ENCODE measurements at regions of chr2 and their contacts with region 1.

Region 1: GRCh38 chr2:235595422-235596010 is 101.7 kb downstream of the AGAP1 start:
- DNase-seq: peak; percentile 51
- H3K4me3 ChIP-seq: no peak overlapping the region
- H3K27ac ChIP-seq: no peak overlapping the region
- H3K4me1 ChIP-seq: peaks cover 14% of the 10 kb centered on the region
- H3K27me3 ChIP-seq: no peaks in the 10 kb centered on the region
- CTCF ChIP-seq: peak; percentile 85 to 89

Region 2: DNA sequence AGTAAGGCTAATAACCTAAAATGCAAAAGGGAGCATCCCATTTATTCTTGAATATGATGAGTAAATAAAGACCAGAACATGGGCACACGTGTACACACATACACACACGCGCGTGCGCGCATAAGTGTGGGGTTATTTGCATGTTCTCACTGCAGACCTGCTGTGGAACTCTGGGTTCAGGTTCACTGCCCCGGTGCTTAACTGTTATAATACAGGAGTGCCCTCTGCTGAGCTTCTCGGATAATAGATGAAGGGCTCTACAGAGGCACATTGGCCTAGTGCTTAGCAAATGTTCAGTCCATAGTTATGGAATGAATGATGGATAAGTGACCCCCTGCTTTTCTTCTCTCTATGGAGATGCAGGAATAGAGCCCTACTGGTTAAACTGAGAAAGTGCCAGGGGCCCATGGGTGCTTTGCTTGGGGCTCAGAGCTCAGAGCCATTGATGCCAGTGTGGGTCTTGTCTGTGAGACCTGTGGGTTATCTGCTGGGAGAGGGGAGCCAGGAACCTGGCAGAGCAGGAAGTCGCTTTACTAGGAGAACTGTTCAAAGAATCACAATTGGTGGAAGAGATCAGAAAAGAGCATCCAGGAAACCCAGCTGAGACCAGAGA is 1095.0 kb before region 1 on chr2:
- CTCF ChIA-PET with region 1: no interaction called
- dilution Hi-C with region 1: no loop called
- in situ Hi-C with region 1: no loop called
- intact Hi-C with region 1: no loop called
- DNase-seq: peak; percentile 47
- H3K4me3 ChIP-seq: no peak overlapping the region
- H3K27ac ChIP-seq: no peak overlapping the region
- H3K4me1 ChIP-seq: peaks cover 31% of the 10 kb centered on the region
- H3K27me3 ChIP-seq: no peaks in the 10 kb centered on the region
- CTCF ChIP-seq: peak; percentile 54 to 73

Region 3: DNA sequence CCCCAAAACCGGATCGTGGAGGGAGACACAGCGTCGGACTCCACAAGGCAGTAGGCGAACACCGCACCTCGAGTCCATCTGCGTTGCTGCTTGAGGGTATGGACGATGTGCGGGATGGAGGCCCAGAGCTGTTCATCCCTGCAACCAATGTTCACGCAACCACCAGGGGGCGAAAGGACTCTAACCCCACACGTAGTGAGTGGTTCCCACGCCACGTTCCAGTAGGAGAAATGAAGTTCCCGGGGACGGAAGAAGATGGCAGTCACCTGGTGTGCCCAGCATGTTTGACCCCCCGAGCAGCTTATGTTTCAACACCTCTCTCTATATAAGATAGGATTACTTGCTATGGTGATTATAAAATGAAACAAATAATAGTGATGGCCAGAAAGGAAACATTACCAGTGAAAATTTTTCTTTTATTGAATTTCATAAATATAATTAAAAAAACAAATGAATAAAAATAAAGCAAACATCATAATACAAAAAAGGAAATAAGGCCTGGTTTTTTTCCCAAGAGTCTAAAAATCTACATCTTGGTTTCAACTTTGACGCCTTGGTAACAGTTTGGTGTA is 459.4 kb before region 1 on chr2:
- CTCF ChIA-PET with region 1: interaction called, 18 read pairs
- dilution Hi-C with region 1: no loop called
- in situ Hi-C with region 1: loop called (anchors 5 to 10 kb)
- intact Hi-C with region 1: loop called (anchors 1 kb)
- DNase-seq: peak; percentile 40
- H3K4me3 ChIP-seq: no peak overlapping the region
- H3K27ac ChIP-seq: no peak overlapping the region
- H3K4me1 ChIP-seq: no peaks in the 10 kb centered on the region
- H3K27me3 ChIP-seq: no peaks in the 10 kb centered on the region
- CTCF ChIP-seq: peak; percentile 82 to 91

Region 4: GRCh38 chr2:235493775-235494715 is 101.5 kb before region 1 on chr2 and contains the start of gene AGAP1:
- CTCF ChIA-PET with region 1: no interaction called
- dilution Hi-C with region 1: no loop called
- in situ Hi-C with region 1: no loop called
- intact Hi-C with region 1: loop called (anchors 2 kb)
- DNase-seq: peak; percentile 76
- H3K4me3 ChIP-seq: peak within 1 kb of the TSS; percentile 62 to 80 (median 67)
- H3K27ac ChIP-seq: peak within 1 kb of the TSS; percentile 46
- H3K4me1 ChIP-seq: peaks cover 14% of the 10 kb centered on the region
- H3K27me3 ChIP-seq: no peaks in the 10 kb centered on the region
- CTCF ChIP-seq: no peak
- total RNA-seq, gene AGAP1: 11.2 to 28.9 TPM

Region 5: GRCh38 chr2:235666213-235666781 is 70.8 kb after region 1 on chr2:
- CTCF ChIA-PET with region 1: no interaction called
- dilution Hi-C with region 1: no loop called
- in situ Hi-C with region 1: no loop called
- intact Hi-C with region 1: loop called (anchors 1 kb)
- DNase-seq: peak; percentile 92
- H3K4me3 ChIP-seq: peak overlapping the region; percentile 46 to 51 (median 50)
- H3K27ac ChIP-seq: peak overlapping the region; percentile 55
- H3K4me1 ChIP-seq: peaks cover 23% of the 10 kb centered on the region
- H3K27me3 ChIP-seq: no peaks in the 10 kb centered on the region
- CTCF ChIP-seq: no peak

Region 6: GRCh38 chr2:235685024-235685721 is 89.7 kb after region 1 on chr2:
- CTCF ChIA-PET with region 1: no interaction called
- dilution Hi-C with region 1: no loop called
- in situ Hi-C with region 1: no loop called
- intact Hi-C with region 1: no loop called
- DNase-seq: no peak
- H3K4me3 ChIP-seq: no peak overlapping the region
- H3K27ac ChIP-seq: no peak overlapping the region
- H3K4me1 ChIP-seq: no peaks in the 10 kb centered on the region
- H3K27me3 ChIP-seq: no peaks in the 10 kb centered on the region
- CTCF ChIP-seq: no peak

Region 7: GRCh38 chr2:235746257-235747084 is 151.0 kb after region 1 on chr2:
- CTCF ChIA-PET with region 1: interaction called, 16 read pairs
- dilution Hi-C with region 1: no loop called
- in situ Hi-C with region 1: loop called (anchors 5 kb)
- intact Hi-C with region 1: loop called (anchors 1 kb)
- DNase-seq: peak; percentile 66
- H3K4me3 ChIP-seq: no peak overlapping the region
- H3K27ac ChIP-seq: no peak overlapping the region
- H3K4me1 ChIP-seq: peaks cover 18% of the 10 kb centered on the region
- H3K27me3 ChIP-seq: no peaks in the 10 kb centered on the region
- CTCF ChIP-seq: peak; percentile 60 to 81

Region 8: GRCh38 chr2:235827585-235827992 is 232.1 kb after region 1 on chr2:
- CTCF ChIA-PET with region 1: no interaction called
- dilution Hi-C with region 1: no loop called
- in situ Hi-C with region 1: no loop called
- intact Hi-C with region 1: no loop called
- DNase-seq: no peak
- H3K4me3 ChIP-seq: no peak overlapping the region
- H3K27ac ChIP-seq: no peak overlapping the region
- H3K4me1 ChIP-seq: peaks cover 8% of the 10 kb centered on the region
- H3K27me3 ChIP-seq: no peaks in the 10 kb centered on the region
- CTCF ChIP-seq: no peak

Measured in mammary epithelial cell (primary cell).